CD8-positive, alpha-beta T cell (primary cell): ENCODE measurements at regions of chr2 and their contacts with region 1.

Region 1: DNA sequence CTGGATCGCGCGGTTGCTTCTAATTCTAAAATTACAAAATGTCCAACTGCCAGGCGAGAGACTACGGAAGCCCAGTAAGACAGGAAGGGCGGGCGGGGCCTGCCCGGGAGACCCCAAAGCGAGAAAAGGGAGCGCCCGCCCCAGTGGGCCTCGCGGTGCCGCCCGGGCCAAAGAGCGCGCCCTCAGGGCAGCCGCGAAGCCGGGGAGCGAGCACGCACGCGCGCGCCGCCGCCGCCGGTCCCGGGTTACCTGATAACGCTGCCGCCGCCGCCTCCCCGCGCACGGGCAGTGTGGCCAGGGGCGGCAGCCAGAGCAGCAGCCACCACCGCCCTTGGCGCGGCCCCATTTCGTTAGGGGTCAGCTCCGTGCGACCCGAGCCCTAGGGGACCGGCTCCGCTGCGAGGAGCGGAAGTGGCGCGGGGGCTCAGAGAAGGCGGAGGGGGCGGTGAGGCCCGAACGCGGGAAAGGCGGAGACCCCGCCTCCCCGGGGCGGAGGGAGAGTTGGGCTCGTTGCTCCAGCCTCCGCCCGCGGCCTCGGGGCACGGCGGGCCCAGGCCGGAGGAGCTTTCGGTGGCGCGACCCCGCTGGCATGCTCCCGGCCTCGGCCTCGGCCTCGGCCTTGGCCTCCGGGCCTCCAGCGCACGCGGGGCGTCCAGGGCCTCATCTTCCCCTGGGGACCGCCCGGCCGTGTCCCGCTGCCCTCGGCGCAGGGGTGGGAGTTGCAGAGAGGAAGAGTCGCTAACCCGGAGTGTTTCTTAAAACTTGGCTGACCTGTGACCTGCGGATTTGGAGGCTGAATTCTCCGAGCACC is at the start of gene NEMP2:
- DNase-seq: peak; percentile 69 to 93 (median 81)
- ATAC-seq: peak; percentile 68
- H3K4me3 ChIP-seq: peak within 1 kb of the TSS; percentile 67 to 73
- H3K4me3 Mint-ChIP-seq: peak within 1 kb of the TSS; percentile 96
- H3K27ac ChIP-seq: peak within 1 kb of the TSS; percentile 92 to 95
- H3K27ac Mint-ChIP-seq: peak within 1 kb of the TSS; percentile 100
- H3K4me1 ChIP-seq: peaks cover 39% of the 10 kb centered on the region
- H3K4me1 Mint-ChIP-seq: peaks cover 64% of the 10 kb centered on the region
- H3K27me3 ChIP-seq: no peaks in the 10 kb centered on the region
- H3K27me3 Mint-ChIP-seq: no peaks in the 10 kb centered on the region
- CTCF ChIP-seq: no peak
- total RNA-seq, gene NEMP2: 7.2 to 7.8 TPM

Region 2: DNA sequence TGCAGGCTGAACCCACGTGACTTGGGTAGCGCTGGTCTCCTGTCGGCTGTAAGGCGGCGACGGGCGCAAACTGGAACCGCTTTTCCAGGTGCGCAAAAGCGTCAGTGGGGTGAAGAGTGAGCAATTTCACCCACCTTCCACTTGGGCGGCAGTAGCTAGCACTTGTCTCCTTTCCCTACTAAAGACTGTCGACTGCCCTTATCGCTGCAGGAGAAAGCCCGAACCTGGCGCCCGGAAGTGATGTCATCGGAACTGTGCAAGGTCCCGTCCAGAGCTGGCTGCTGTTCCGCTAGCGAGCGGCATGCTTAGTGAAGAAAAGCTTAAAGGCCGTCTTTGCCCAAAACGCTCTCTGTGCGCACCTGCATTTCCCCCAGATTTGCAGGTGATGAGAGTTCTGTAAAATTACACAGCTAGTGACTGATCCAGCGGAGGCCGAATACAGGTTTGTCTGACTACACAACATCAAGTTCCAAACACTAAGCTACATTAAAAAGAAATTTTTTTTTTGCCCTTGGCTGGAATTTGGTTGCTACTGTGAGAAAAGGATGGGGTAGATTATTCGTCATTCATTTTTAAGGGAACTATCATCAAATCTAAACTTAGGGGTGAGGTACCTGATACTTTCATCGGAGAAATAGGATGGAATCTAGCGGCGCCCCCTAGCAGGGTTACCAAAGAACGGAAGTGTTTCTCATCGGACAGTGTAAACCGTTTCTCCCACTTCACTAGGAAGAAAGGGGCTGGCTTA is 771.8 kb before region 1 on chr2 and contains the start of gene OSGEPL1:
- CTCF ChIA-PET with region 1: no interaction called
- POLR2A ChIA-PET with region 1: no interaction called
- intact Hi-C with region 1: loop called in 1 of 2 experiments (anchors 10 kb)
- DNase-seq: peak; percentile 84 to 97 (median 94)
- ATAC-seq: peak; percentile 92
- H3K4me3 ChIP-seq: peak within 1 kb of the TSS; percentile 69 to 83
- H3K4me3 Mint-ChIP-seq: peak within 1 kb of the TSS; percentile 97
- H3K27ac ChIP-seq: peak within 1 kb of the TSS; percentile 85 to 88
- H3K27ac Mint-ChIP-seq: peak within 1 kb of the TSS; percentile 98
- H3K4me1 ChIP-seq: peaks cover 8% of the 10 kb centered on the region
- H3K4me1 Mint-ChIP-seq: peaks cover 15% of the 10 kb centered on the region
- H3K27me3 ChIP-seq: no peaks in the 10 kb centered on the region
- H3K27me3 Mint-ChIP-seq: no peaks in the 10 kb centered on the region
- CTCF ChIP-seq: peak; percentile 52
- total RNA-seq, gene OSGEPL1: 3.6 to 3.9 TPM

Region 3: DNA sequence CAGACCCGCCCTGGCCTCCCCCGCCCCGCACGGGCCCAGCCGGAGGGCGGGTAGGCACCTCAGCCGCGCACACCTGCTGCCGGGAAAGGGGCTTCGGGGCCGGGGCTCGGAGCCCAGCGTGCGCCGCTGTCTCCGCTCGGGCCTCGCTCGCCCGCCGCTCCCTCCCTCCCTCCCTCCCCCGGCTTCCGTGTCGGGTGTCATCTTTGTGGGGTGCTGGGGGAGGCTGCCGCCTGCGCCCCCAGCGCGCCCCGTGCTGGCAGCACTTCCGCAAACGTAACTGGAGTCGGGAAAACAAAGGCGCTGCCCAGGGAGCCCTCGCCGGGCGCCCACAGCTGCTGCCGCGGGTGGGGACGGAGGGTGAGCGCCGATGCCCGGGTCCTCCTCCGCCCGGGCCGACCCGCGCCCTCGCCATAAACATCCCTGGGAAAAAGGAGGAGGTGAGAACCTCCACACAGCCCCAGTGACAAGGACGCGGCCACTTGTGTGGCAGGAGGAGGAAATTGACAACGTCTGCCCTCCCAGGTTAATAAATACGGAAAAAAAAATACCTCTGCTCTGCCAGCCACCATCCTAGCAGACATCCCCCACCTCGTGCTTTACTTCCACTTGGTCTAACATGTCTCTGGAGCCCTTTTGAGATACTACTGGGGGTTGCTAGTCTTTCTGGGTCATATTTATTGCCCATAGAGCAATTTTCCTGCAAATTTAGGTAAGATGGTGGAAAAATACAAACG is 125.8 kb before region 1 on chr2:
- CTCF ChIA-PET with region 1: interaction called, 5 read pairs
- POLR2A ChIA-PET with region 1: interaction called, 42 read pairs
- intact Hi-C with region 1: loop called (anchors 1 to 5 kb)
- DNase-seq: peak; percentile 62 to 92 (median 80)
- ATAC-seq: peak; percentile 56
- H3K4me3 ChIP-seq: peak overlapping the region; percentile 69 to 89
- H3K4me3 Mint-ChIP-seq: peak overlapping the region; percentile 92
- H3K27ac ChIP-seq: peak overlapping the region; percentile 98 to 99
- H3K27ac Mint-ChIP-seq: peak overlapping the region; percentile 99
- H3K4me1 ChIP-seq: peaks cover 51% of the 10 kb centered on the region
- H3K4me1 Mint-ChIP-seq: peaks cover 45% of the 10 kb centered on the region
- H3K27me3 ChIP-seq: no peaks in the 10 kb centered on the region
- H3K27me3 Mint-ChIP-seq: no peaks in the 10 kb centered on the region
- CTCF ChIP-seq: no peak

Region 4: DNA sequence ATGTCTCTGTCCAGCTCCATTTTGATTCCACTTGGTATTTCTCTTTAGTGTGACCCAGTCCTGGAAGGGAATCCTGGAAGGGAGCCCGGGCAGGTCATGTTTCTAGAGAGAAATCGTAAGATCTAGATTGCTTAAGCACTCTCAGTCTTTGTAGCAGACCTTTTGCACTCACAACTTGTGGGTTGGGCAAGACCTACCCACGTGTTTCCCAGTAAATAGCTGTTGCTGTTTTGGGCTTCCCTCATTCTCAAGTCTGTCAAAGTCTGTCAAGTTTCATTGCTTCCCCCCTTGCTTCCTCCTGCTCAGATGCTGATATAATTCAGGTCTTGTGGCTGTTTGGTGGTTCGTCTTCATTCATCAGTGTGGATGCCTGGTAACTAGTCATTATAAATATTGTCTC is 17.4 kb after region 1 on chr2:
- CTCF ChIA-PET with region 1: interaction called, 3 read pairs
- POLR2A ChIA-PET with region 1: interaction called, 5 read pairs
- intact Hi-C with region 1: loop called in 1 of 2 experiments (anchors 2 kb)
- DNase-seq: peak in 4 of 9 experiments; percentile 13 to 73 (median 30)
- ATAC-seq: peak; percentile 80
- H3K4me3 ChIP-seq: no peak overlapping the region
- H3K4me3 Mint-ChIP-seq: peak overlapping the region; percentile 35
- H3K27ac ChIP-seq: no peak overlapping the region
- H3K27ac Mint-ChIP-seq: no peak overlapping the region
- H3K4me1 ChIP-seq: no peaks in the 10 kb centered on the region
- H3K4me1 Mint-ChIP-seq: peaks cover 10% of the 10 kb centered on the region
- H3K27me3 ChIP-seq: no peaks in the 10 kb centered on the region
- H3K27me3 Mint-ChIP-seq: no peaks in the 10 kb centered on the region
- CTCF ChIP-seq: no peak

Region 5: DNA sequence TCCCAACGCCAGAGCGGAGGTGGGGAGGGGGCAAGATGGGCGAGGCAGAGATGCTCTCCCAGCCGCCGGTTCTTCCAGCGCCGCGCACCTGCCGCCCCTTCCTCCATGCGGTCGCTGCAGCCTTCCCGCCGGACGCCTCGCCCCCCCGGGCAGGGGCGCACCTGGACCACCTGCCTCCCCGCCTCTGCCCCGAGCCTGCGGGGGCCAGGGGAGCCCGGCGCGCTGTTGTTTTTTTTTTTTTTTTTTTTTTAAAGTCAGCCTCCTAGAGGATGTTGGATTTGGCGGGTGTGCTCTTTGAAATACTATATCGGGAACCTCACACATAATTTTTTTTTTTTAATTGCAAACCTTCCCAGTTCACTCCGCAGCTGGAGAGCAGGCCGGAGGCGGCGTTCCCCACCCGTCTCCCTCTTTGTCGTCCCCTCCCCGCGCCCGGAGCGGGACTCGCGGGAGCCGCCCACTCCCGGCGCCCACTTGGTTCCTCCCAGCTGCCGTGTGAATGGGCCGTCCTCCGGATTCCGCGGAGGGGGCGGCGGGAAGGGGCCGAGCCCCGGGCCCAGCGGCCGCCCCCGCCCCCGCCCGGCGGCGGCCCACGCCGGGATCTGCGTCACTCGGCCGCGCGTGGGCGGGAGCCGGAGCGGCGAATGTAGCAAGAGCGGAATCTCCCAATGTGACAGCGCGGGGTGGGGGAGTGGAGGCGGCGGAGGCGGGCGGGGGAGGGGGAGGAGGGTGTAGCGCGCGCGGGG is 113.9 kb after region 1 on chr2:
- CTCF ChIA-PET with region 1: no interaction called
- POLR2A ChIA-PET with region 1: interaction called, 5 read pairs
- intact Hi-C with region 1: loop called (anchors 1 to 2 kb)
- DNase-seq: peak; percentile 80 to 97 (median 88)
- ATAC-seq: peak; percentile 81
- H3K4me3 ChIP-seq: peak overlapping the region; percentile 58 to 63
- H3K4me3 Mint-ChIP-seq: peak overlapping the region; percentile 84
- H3K27ac ChIP-seq: peak overlapping the region; percentile 63 to 84
- H3K27ac Mint-ChIP-seq: peak overlapping the region; percentile 88
- H3K4me1 ChIP-seq: peaks cover 26% of the 10 kb centered on the region
- H3K4me1 Mint-ChIP-seq: peaks cover 44% of the 10 kb centered on the region
- H3K27me3 ChIP-seq: no peaks in the 10 kb centered on the region
- H3K27me3 Mint-ChIP-seq: no peaks in the 10 kb centered on the region
- CTCF ChIP-seq: no peak

Region 6: GRCh38 chr2:191020221-191020741 is 485.8 kb after region 1 on chr2:
- CTCF ChIA-PET with region 1: no interaction called
- POLR2A ChIA-PET with region 1: no interaction called
- intact Hi-C with region 1: loop called (anchors 10 kb)
- DNase-seq: peak; percentile 82 to 98 (median 93)
- ATAC-seq: peak; percentile 72
- H3K4me3 ChIP-seq: peak overlapping the region; percentile 73 to 82
- H3K4me3 Mint-ChIP-seq: no peak overlapping the region
- H3K27ac ChIP-seq: peak overlapping the region; percentile 62 to 86
- H3K27ac Mint-ChIP-seq: no peak overlapping the region
- H3K4me1 ChIP-seq: peaks cover 52% of the 10 kb centered on the region
- H3K4me1 Mint-ChIP-seq: peaks cover 28% of the 10 kb centered on the region
- H3K27me3 ChIP-seq: no peaks in the 10 kb centered on the region
- H3K27me3 Mint-ChIP-seq: no peaks in the 10 kb centered on the region
- CTCF ChIP-seq: no peak